ENCODE measurements at regions of chr10 and their contacts with region 1.

Region 1: GRCh38 chr10:28663576-28664313 is 13.6 kb upstream of the BAMBI start:
- DNase-seq: peak; percentile 59
- H3K4me3 ChIP-seq: no peak overlapping the region
- H3K27ac ChIP-seq: no peak overlapping the region
- H3K4me1 ChIP-seq: peaks cover 11% of the 10 kb centered on the region
- H3K27me3 ChIP-seq: peaks cover 2% of the 10 kb centered on the region
- CTCF ChIP-seq: peak; percentile 98 to 99

Region 2: GRCh38 chr10:28754930-28755718 is 91.4 kb after region 1 on chr10:
- CTCF ChIA-PET with region 1: no interaction called
- dilution Hi-C with region 1: no loop called
- in situ Hi-C with region 1: no loop called
- intact Hi-C with region 1: no loop called
- DNase-seq: no peak
- H3K4me3 ChIP-seq: no peak overlapping the region
- H3K27ac ChIP-seq: no peak overlapping the region
- H3K4me1 ChIP-seq: no peaks in the 10 kb centered on the region
- H3K27me3 ChIP-seq: no peaks in the 10 kb centered on the region
- CTCF ChIP-seq: no peak

Region 3: GRCh38 chr10:28984431-28984830 is 320.7 kb after region 1 on chr10:
- CTCF ChIA-PET with region 1: no interaction called
- dilution Hi-C with region 1: no loop called
- in situ Hi-C with region 1: loop called in 1 of 2 experiments (anchors 10 kb)
- intact Hi-C with region 1: no loop called
- DNase-seq: peak; percentile 83
- H3K4me3 ChIP-seq: no peak overlapping the region
- H3K27ac ChIP-seq: no peak overlapping the region
- H3K4me1 ChIP-seq: peaks cover 5% of the 10 kb centered on the region
- H3K27me3 ChIP-seq: peaks cover 2% of the 10 kb centered on the region
- CTCF ChIP-seq: no peak

Region 4: GRCh38 chr10:28991326-28992270 is 327.9 kb after region 1 on chr10:
- CTCF ChIA-PET with region 1: interaction called, 5 read pairs
- dilution Hi-C with region 1: no loop called
- in situ Hi-C with region 1: loop called in 1 of 2 experiments (anchors 10 kb)
- intact Hi-C with region 1: loop called (anchors 1 kb)
- DNase-seq: peak; percentile 56
- H3K4me3 ChIP-seq: no peak overlapping the region
- H3K27ac ChIP-seq: no peak overlapping the region
- H3K4me1 ChIP-seq: peaks cover 17% of the 10 kb centered on the region
- H3K27me3 ChIP-seq: no peaks in the 10 kb centered on the region
- CTCF ChIP-seq: peak; percentile 82

Region 5: DNA sequence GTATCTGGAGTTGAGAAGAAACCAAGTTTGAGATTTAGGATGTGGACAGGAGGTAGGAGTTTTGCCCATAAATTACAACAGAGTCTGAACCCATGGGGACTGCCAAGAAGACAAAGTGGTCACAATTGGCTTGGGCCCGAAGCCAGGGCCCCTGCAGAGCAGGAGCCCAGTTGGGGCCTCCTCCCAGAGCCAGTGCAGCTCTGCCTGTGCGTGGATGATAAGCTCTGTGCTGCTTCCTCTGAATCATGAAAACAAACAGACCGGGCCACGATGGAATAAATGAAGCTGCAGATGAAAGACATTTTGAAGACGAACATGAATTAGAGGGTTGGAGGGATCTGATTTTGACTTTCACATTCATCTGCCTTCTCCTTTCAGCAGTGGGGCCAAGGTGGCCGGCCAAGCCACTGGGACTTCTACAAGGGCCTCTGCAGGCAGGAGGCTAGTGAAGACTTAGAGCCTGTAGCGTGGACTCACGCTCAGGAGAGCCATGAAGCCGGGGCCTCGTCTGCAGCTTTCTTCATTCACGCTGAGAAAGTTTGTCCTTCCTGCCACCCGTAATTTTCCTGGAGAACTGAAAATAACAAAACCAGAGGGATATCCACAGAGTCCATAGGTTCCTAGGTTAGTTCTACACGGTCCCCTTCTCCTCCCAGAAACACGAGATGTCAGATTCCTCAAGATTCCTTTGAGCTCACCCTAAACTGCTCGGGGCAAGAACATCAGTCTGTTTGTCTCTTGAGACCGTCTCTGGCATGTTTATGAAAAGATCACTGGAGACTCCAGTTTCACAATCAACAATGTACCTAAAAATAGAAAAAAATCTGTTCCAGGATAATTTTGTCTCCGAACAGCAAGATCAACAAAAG is 468.4 kb after region 1 on chr10:
- CTCF ChIA-PET with region 1: interaction called, 6 read pairs
- dilution Hi-C with region 1: no loop called
- in situ Hi-C with region 1: loop called (anchors 10 kb)
- intact Hi-C with region 1: loop called (anchors 1 kb)
- DNase-seq: no peak
- H3K4me3 ChIP-seq: no peak overlapping the region
- H3K27ac ChIP-seq: no peak overlapping the region
- H3K4me1 ChIP-seq: peaks cover 4% of the 10 kb centered on the region
- H3K27me3 ChIP-seq: no peaks in the 10 kb centered on the region
- CTCF ChIP-seq: no peak

Region 6: DNA sequence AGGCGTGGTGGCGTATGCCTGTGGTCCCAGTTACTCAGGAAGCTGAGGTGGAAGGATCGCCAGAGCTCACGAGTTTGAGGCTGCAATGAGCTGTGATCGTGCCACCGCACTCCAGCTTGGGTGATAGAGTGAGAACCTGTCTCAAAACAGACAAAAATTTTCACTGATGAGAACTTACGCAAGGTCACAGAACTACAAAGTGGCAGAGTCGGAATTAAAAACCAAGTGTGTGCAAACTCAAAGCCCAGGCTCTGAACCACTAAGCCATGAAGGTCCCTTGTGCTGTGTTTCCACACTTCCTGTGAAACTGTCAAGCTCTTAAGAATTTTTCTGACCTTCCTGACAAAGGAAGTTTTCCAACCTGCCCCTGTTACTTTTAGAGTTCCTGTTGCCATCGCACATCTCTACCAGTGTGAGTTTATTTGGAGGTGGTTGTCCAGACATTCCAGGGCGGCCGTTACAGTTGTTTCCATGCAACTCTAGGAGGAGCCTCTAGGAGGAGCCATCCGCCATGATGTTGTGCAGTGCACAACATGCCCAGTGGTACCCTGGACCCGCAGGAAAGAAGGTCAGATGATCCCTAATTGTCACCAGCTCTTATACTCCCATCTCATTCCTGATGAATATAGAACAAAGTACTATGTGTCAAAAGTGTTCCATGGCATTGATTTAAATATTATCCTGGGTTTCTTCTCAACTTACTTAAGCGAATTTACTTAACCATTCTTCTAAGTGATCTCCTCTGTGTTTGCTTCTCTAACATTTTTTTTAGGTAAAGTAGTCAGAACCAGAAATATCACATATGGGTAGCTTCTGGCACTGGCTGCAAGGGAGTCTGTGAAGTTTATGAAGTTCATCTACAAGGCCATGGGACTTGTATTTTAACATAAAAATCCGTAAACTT is 576.1 kb after region 1 on chr10:
- CTCF ChIA-PET with region 1: no interaction called
- dilution Hi-C with region 1: no loop called
- in situ Hi-C with region 1: no loop called
- intact Hi-C with region 1: loop called (anchors 5 kb)
- DNase-seq: no peak
- H3K4me3 ChIP-seq: no peak overlapping the region
- H3K27ac ChIP-seq: no peak overlapping the region
- H3K4me1 ChIP-seq: no peaks in the 10 kb centered on the region
- H3K27me3 ChIP-seq: peaks cover 7% of the 10 kb centered on the region
- CTCF ChIP-seq: peak; percentile 30 to 48

Region 7: GRCh38 chr10:29304264-29305030 is 640.7 kb after region 1 on chr10:
- CTCF ChIA-PET with region 1: interaction called, 7 read pairs
- dilution Hi-C with region 1: no loop called
- in situ Hi-C with region 1: loop called (anchors 10 kb)
- intact Hi-C with region 1: loop called (anchors 1 kb)
- DNase-seq: peak; percentile 43
- H3K4me3 ChIP-seq: no peak overlapping the region
- H3K27ac ChIP-seq: no peak overlapping the region
- H3K4me1 ChIP-seq: no peaks in the 10 kb centered on the region
- H3K27me3 ChIP-seq: no peaks in the 10 kb centered on the region
- CTCF ChIP-seq: peak; percentile 77 to 91

Measured in mammary epithelial cell (primary cell).